Esophagus squamous epithelium (tissue), 5 donors: ENCODE measurements at regions of chr19 and their contacts with region 1.

Region 1: GRCh38 chr19:49264258-49264657 is 60.7 kb downstream of the SLC6A16 start:
- DNase-seq: no peak
- H3K4me3 ChIP-seq: no peak overlapping the region
- H3K27ac ChIP-seq: no peak overlapping the region
- H3K4me1 ChIP-seq: no peaks in the 10 kb centered on the region
- H3K27me3 ChIP-seq: peaks cover 0 to 3% (median 0%) of the 10 kb centered on the region in 4 donors
- CTCF ChIP-seq: no peak
- POLR2A ChIP-seq: no peak

Region 2: DNA sequence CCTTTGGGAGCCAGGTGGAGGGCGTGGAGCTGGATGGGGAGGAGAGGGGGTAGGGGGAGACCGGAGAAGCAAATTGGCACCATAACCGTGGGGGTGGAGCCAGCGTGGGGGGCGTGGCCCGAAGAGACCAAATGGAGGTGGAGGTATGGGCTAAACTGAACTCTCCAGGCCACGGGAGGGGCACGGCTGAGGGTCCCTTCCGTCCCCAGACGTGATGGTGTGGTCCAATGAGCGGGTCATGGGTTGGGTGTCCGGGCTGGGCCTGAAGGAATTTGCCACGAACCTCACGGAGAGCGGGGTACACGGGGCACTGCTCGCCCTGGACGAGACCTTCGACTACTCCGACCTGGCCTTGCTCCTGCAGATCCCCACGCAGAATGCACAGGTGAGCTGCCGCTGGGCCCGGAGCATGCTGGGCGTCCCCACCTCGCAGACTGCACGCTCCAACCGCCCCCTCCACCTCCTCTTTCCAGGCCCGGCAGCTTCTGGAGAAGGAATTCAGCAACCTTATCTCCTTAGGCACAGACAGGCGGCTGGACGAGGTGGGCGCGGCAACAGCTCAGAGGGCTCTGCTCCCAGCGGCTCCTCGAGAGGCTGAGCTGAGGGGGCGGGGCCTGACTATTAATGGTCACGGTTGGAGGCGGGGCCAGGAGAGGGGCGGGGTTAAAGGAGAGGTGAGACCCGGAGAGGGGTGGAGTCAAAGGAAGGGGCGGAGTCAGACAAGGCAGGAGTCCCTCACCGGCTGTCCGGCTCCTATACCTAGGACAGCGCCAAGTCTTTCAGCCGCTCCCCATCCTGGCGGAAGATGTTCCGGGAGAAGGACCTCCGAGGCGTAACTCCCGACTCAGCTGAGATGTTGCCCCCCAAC is 115.2 kb before region 1 on chr19:
- intact Hi-C with region 1: no loop called
- DNase-seq: no peak
- H3K4me3 ChIP-seq: peak overlapping the region; percentile 46 to 70 (median 64)
- H3K27ac ChIP-seq: peak overlapping the region; percentile 69 to 86 (median 84)
- H3K4me1 ChIP-seq: peaks cover 31 to 57% (median 33%) of the 10 kb centered on the region in 3 donors
- H3K27me3 ChIP-seq: peaks cover 0 to 13% (median 0%) of the 10 kb centered on the region in 4 donors
- CTCF ChIP-seq: no peak
- POLR2A ChIP-seq: peak in 1 of 4 donors; percentile 33

Region 3: DNA sequence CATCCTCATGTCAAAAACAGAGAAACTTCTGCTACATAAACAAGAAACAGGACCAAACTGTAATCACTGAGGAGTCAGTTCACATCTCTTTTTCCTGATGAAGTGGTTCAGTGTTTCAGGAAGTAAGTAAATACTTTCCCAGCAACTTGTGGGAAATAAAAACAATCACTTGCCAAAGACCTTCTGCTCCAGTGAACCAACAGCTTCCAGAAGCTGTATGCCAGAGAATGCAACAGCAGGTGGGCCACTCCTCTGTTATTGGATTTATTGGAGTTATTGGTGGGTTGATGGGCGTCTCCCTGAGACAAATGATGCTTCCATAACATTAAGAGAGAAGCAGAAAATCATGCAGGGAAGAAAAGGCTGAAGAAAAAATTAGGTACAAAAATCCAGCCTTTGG is 50.9 kb after region 1 on chr19:
- intact Hi-C with region 1: loop called (anchors 10 kb)
- DNase-seq: no peak
- H3K4me3 ChIP-seq: no peak overlapping the region
- H3K27ac ChIP-seq: no peak overlapping the region
- H3K4me1 ChIP-seq: no peaks in the 10 kb centered on the region
- H3K27me3 ChIP-seq: no peaks in the 10 kb centered on the region
- CTCF ChIP-seq: no peak
- POLR2A ChIP-seq: no peak

Region 4: DNA sequence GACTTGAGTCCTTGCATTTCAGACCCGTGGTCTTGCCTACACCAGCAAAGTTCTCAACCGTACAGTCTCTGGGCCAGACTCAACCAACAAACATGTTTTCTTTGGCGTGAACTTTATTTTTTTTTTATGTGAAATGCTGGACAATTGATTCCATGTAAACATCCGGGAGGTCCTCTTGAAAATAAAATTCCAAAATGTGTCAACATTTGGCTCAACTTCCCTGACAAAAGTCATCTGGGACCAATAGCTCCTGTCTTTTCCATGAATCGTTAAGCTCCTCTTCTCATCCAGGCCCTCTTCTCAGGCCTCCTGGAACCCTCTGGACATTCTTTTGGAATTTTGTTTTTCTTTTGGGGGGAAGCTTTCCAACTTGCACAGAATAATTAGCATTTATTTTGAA is 191.5 kb after region 1 on chr19:
- intact Hi-C with region 1: no loop called
- DNase-seq: no peak
- H3K4me3 ChIP-seq: no peak overlapping the region
- H3K27ac ChIP-seq: peak overlapping the region; percentile 31 to 97 (median 64)
- H3K4me1 ChIP-seq: peaks cover 5 to 60% (median 17%) of the 10 kb centered on the region in 3 donors
- H3K27me3 ChIP-seq: no peaks in the 10 kb centered on the region
- CTCF ChIP-seq: no peak
- POLR2A ChIP-seq: no peak